Heart right ventricle (tissue), 16 donors: ENCODE measurements at regions of chr5 and their contacts with region 1.

Region 1: GRCh38 chr5:76733049-76733417 is 17.1 kb downstream of the F2R start:
- DNase-seq: no peak
- ATAC-seq: peak in 1 of 8 donors; percentile 17
- H3K4me3 ChIP-seq: no peak overlapping the region
- H3K27ac ChIP-seq: peak overlapping the region in 1 of 10 donors; percentile 75
- H3K4me1 ChIP-seq: peaks cover 0 to 22% (median 12%) of the 10 kb centered on the region in 9 donors
- H3K27me3 ChIP-seq: no peaks in the 10 kb centered on the region
- CTCF ChIP-seq: no peak

Region 2: GRCh38 chr5:78243639-78244038 is 1510.6 kb after region 1 on chr5:
- intact Hi-C with region 1: loop called in 1 of 10 experiments (anchors 5 kb)
- DNase-seq: no peak
- ATAC-seq: peak in 1 of 8 donors; percentile 21
- H3K4me3 ChIP-seq: no peak overlapping the region
- H3K27ac ChIP-seq: no peak overlapping the region
- H3K4me1 ChIP-seq: peaks cover 0 to 15% (median 9%) of the 10 kb centered on the region in 9 donors
- H3K27me3 ChIP-seq: no peaks in the 10 kb centered on the region
- CTCF ChIP-seq: no peak